ENCODE measurements at regions of chr15 and their contacts with region 1.

Region 1: GRCh38 chr15:77024271-77025082 is 29.6 kb downstream of the PSTPIP1 start:
- DNase-seq: peak; percentile 74
- ATAC-seq: peak; percentile 78
- H3K4me3 ChIP-seq: no peak overlapping the region
- H3K4me3 Mint-ChIP-seq: no peak overlapping the region
- H3K27ac ChIP-seq: no peak overlapping the region
- H3K27ac Mint-ChIP-seq: no peak overlapping the region
- H3K4me1 ChIP-seq: peaks cover 4 to 21% of the 10 kb centered on the region in 2 donors
- H3K4me1 Mint-ChIP-seq: peaks cover 17% of the 10 kb centered on the region
- H3K27me3 ChIP-seq: no peaks in the 10 kb centered on the region
- H3K27me3 Mint-ChIP-seq: no peaks in the 10 kb centered on the region
- CTCF ChIP-seq: peak; percentile 98

Region 2: DNA sequence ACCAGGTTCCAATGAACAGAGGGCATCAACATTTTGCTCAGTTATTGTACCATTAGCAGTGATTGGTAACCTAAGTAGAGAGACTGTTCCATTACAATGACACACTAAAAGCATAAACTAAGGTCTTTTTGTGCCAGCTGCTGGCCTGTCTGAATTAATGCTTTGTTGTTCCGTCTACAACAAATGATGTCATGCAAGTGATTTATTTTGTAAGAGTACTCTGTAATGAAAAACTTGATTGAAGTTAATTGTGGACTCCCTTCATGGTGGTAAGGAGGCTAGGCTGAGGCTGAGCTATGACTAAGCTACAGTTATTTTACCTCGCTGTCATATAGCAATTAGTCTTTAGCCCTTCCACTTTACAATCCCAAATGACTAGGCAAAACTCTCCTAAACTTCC is 69.7 kb before region 1 on chr15:
- CTCF ChIA-PET with region 1: interaction called, 3 read pairs
- POLR2A ChIA-PET with region 1: interaction called, 12 read pairs
- intact Hi-C with region 1: no loop called
- DNase-seq: no peak
- ATAC-seq: no peak
- H3K4me3 ChIP-seq: no peak overlapping the region
- H3K4me3 Mint-ChIP-seq: no peak overlapping the region
- H3K27ac ChIP-seq: no peak overlapping the region
- H3K27ac Mint-ChIP-seq: no peak overlapping the region
- H3K4me1 ChIP-seq: no peaks in the 10 kb centered on the region
- H3K4me1 Mint-ChIP-seq: no peaks in the 10 kb centered on the region
- H3K27me3 ChIP-seq: no peaks in the 10 kb centered on the region
- H3K27me3 Mint-ChIP-seq: no peaks in the 10 kb centered on the region
- CTCF ChIP-seq: no peak

Region 3: GRCh38 chr15:76983590-76984375 is 40.7 kb before region 1 on chr15:
- CTCF ChIA-PET with region 1: no interaction called
- POLR2A ChIA-PET with region 1: no interaction called
- intact Hi-C with region 1: no loop called
- DNase-seq: no peak
- ATAC-seq: no peak
- H3K4me3 ChIP-seq: no peak overlapping the region
- H3K4me3 Mint-ChIP-seq: no peak overlapping the region
- H3K27ac ChIP-seq: no peak overlapping the region
- H3K27ac Mint-ChIP-seq: no peak overlapping the region
- H3K4me1 ChIP-seq: peaks cover 9 to 13% of the 10 kb centered on the region in 2 donors
- H3K4me1 Mint-ChIP-seq: peaks cover 11% of the 10 kb centered on the region
- H3K27me3 ChIP-seq: peaks cover 0 to 9% (median 0%) of the 10 kb centered on the region in 4 experiments
- H3K27me3 Mint-ChIP-seq: peaks cover 4% of the 10 kb centered on the region
- CTCF ChIP-seq: no peak

Region 4: DNA sequence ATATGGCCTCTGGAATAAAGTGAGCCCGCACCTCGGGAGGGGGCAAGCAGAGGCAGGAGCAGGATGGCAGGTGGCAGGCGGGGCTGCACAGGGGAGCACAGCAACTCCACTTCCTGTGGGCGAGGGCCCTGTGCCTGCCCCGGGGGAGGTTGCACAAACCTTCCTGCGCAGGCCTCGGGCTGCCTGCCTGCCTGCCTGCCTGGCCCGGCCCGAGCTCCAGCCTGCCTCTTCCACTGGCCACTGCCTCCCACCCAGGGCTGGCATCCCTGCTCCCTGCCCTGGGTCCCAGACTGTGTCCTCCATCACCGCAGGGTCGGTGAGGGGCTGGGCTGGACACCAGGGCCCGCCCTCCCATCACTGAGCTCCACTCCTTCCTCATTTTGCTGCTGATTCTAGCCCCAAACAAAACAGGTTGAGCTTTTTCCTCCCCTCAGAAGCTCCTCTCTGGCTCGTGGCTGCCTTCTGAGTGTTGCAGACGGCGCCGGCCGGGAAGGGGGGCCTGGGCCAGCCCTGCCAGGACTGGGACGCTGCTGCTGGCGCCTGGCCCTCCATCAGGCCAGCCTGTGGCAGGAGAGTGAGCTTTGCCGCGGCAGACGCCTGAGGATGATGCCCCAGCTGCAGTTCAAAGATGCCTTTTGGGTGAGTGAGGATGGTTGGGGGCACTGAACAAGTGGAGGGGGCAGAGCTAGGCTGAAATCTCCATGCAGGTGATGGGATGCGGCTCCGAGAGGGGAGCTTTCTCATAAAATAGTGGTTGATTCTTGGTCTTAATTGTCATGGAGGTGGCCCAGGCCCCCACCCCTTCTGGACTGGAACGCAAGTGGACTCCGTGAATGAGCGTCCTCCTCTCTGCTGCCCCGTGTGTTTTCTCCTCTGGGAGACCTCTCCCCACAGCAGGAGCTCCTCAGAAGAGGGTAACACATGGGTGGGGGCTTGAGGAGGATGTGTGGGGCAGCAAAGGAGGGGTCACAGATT is 29.2 kb before region 1 on chr15 and contains the start of gene PSTPIP1:
- CTCF ChIA-PET with region 1: interaction called, 12 read pairs
- POLR2A ChIA-PET with region 1: interaction called, 3 read pairs
- intact Hi-C with region 1: loop called (anchors 2 kb)
- DNase-seq: peak; percentile 80
- ATAC-seq: peak; percentile 89
- H3K4me3 ChIP-seq: peak within 1 kb of the TSS; percentile 74 to 86 (median 79)
- H3K4me3 Mint-ChIP-seq: peak within 1 kb of the TSS; percentile 99
- H3K27ac ChIP-seq: peak within 1 kb of the TSS; percentile 79 to 81
- H3K27ac Mint-ChIP-seq: peak within 1 kb of the TSS; percentile 100
- H3K4me1 ChIP-seq: peaks cover 38 to 57% of the 10 kb centered on the region in 2 donors
- H3K4me1 Mint-ChIP-seq: peaks cover 51% of the 10 kb centered on the region
- H3K27me3 ChIP-seq: no peaks in the 10 kb centered on the region
- H3K27me3 Mint-ChIP-seq: no peaks in the 10 kb centered on the region
- CTCF ChIP-seq: no peak
- total RNA-seq, gene PSTPIP1: 67.1 and 69.0 TPM in 2 replicates

Region 5: GRCh38 chr15:77013776-77014131 is 10.7 kb before region 1 on chr15:
- CTCF ChIA-PET with region 1: interaction called, 12 read pairs
- POLR2A ChIA-PET with region 1: no interaction called
- intact Hi-C with region 1: no loop called
- DNase-seq: no peak
- ATAC-seq: peak; percentile 66
- H3K4me3 ChIP-seq: no peak overlapping the region
- H3K4me3 Mint-ChIP-seq: peak overlapping the region; percentile 48
- H3K27ac ChIP-seq: peak overlapping the region in 1 of 2 donors; percentile 47
- H3K27ac Mint-ChIP-seq: peak overlapping the region; percentile 81
- H3K4me1 ChIP-seq: peaks cover 57 to 82% of the 10 kb centered on the region in 2 donors
- H3K4me1 Mint-ChIP-seq: peaks cover 68% of the 10 kb centered on the region
- H3K27me3 ChIP-seq: no peaks in the 10 kb centered on the region
- H3K27me3 Mint-ChIP-seq: no peaks in the 10 kb centered on the region
- CTCF ChIP-seq: no peak